BJ (cell line): ENCODE measurements at regions of chr12 and their contacts with region 1.

Region 1: GRCh38 chr12:104834607-104835006 is 123.5 kb downstream of the SLC41A2 start:
- DNase-seq: no peak
- H3K4me3 ChIP-seq: no peak overlapping the region
- H3K27me3 ChIP-seq: no peaks in the 10 kb centered on the region
- CTCF ChIP-seq: no peak

Region 2: GRCh38 chr12:104788840-104789271 is 45.8 kb before region 1 on chr12:
- CTCF ChIA-PET with region 1: no interaction called
- POLR2A ChIA-PET with region 1: interaction called, 12 read pairs
- DNase-seq: no peak
- H3K4me3 ChIP-seq: no peak overlapping the region
- H3K27me3 ChIP-seq: no peaks in the 10 kb centered on the region
- CTCF ChIP-seq: no peak